Left lung (tissue), 14 donors: ENCODE measurements at regions of chr6 and their contacts with region 1.

Region 1: GRCh38 chr6:125314019-125314581 is 12.3 kb upstream of the HDDC2 start:
- DNase-seq: peak in 3 of 4 donors; percentile 51 to 75 (median 60)
- ATAC-seq: peak; percentile 90
- H3K4me3 ChIP-seq: no peak overlapping the region
- H3K27ac ChIP-seq: no peak overlapping the region
- H3K4me1 ChIP-seq: no peaks in the 10 kb centered on the region
- H3K27me3 ChIP-seq: peaks cover 0 to 10% of the 10 kb centered on the region in 2 donors
- CTCF ChIP-seq: peak; percentile 61 to 67

Region 2: GRCh38 chr6:125753218-125753936 is 439.3 kb after region 1 on chr6:
- intact Hi-C with region 1: loop called in 1 of 2 experiments (anchors 5 kb)
- DNase-seq: no peak
- ATAC-seq: no peak
- H3K4me3 ChIP-seq: no peak overlapping the region
- H3K27ac ChIP-seq: no peak overlapping the region
- H3K4me1 ChIP-seq: peaks cover 6 to 31% of the 10 kb centered on the region in 2 donors
- H3K27me3 ChIP-seq: peaks cover 41 to 93% of the 10 kb centered on the region in 2 donors
- CTCF ChIP-seq: peak; percentile 4 to 33

Region 3: DNA sequence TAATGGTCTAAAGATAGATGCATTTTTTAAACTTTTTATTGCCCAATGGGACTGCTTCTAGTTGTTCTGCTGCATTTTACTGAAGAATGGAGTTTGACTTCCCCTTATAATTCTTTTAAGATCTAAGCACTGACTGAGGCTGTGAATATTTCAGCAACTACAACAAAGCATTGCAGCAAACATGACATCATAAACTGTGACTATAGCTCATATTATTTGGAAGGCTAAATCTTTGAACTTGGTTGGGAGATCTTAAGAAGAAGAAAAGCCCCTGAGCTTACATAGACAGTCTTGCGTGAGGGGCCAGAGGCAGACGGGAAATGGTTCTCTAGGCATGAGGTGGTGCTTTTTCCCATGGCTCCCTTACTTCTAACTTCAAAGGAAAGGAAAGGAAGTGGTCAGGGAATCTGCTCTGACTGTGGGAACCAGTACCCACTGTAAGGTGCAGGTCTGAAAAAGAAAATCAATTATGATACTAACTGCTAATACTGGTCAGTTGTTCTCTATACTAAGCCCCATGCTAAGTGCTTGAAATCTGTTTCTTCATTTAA is 450.1 kb after region 1 on chr6:
- intact Hi-C with region 1: loop called (anchors 5 to 10 kb)
- DNase-seq: no peak
- ATAC-seq: no peak
- H3K4me3 ChIP-seq: no peak overlapping the region
- H3K27ac ChIP-seq: no peak overlapping the region
- H3K4me1 ChIP-seq: no peaks in the 10 kb centered on the region
- H3K27me3 ChIP-seq: peaks cover 0 to 41% of the 10 kb centered on the region in 2 donors
- CTCF ChIP-seq: no peak